ENCODE measurements at regions of chr4 and their contacts with region 1.

Region 1: GRCh38 chr4:123812066-123812390 is 415.4 kb downstream of the SPRY1 start:
- DNase-seq: no peak

Region 2: GRCh38 chr4:123776254-123776653 is 35.8 kb before region 1 on chr4:
- in situ Hi-C with region 1: loop called (anchors 5 kb)
- DNase-seq: no peak

Region 3: DNA sequence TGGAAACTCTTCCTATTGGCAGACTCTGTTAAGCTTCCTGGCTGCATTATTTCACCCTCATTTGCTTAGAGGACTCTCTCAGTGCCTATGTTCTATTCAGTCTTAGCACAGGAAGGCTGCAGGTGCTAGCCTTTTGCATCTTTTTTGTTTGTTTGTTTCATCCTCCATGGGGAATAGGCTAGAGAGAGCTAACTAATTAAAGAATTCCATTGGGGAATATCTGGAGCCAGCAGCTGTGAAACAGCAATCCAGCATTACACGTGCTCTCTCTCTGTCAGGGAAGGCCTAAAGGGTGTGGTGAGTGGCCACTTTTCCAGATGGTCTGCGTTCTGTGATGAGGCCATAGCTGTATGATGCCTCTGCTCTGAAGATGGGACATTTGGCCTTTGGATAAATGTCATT is 218.1 kb after region 1 on chr4:
- in situ Hi-C with region 1: no loop called
- DNase-seq: no peak